H1 (cell line): ENCODE measurements at regions of chr22 and their contacts with region 1.

Region 1: GRCh38 chr22:50456466-50457234 is 18.2 kb downstream of the SBF1 start:
- DNase-seq: no peak
- H3K4me3 ChIP-seq: no peak overlapping the region
- H3K27ac ChIP-seq: no peak overlapping the region
- H3K4me1 ChIP-seq: no peaks in the 10 kb centered on the region
- H3K27me3 ChIP-seq: no peaks in the 10 kb centered on the region; a peak in 1 of 7 replicates
- CTCF ChIP-seq: peak; percentile 53 to 76 (median 63)
- EP300 ChIP-seq: no peak
- POLR2A ChIP-seq: no peak
- RAD21 ChIP-seq: peak; percentile 56 to 64

Region 2: DNA sequence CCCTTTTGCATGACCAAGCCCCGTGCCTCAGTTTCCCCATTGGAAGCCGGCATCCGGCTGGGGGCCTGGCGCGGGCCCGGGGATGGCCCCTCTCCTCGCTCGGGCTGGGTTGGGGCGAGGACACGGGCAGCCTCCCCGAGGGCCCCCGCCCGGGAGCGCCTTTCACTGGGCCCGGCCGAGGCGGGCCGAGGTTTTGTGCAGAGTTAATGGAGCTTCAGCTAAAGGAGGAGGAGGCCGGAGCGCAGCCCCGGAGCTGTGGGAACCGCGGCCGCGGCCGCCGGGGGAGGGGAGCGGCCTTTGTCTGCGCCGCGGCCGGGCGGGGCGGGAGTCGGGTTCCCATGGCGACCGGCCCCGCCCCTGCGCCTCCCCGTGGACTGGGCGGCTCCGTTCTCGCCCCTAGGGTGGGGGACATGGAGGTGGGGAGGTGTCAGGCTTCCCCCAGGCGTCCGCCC is 185.1 kb before region 1 on chr22:
- CTCF ChIA-PET with region 1: no interaction called
- POLR2A ChIA-PET with region 1: no interaction called
- DNase-seq: peak in 1 of 2 experiments; percentile 88
- H3K4me3 ChIP-seq: peak overlapping the region in 3 of 4 experiments; percentile 9 to 55 (median 23); a peak in 5 of 8 replicates
- H3K27ac ChIP-seq: no peak overlapping the region
- H3K4me1 ChIP-seq: peaks cover 2 to 14% (median 9%) of the 10 kb centered on the region in 4 experiments; a peak in 6 of 7 replicates
- H3K27me3 ChIP-seq: peaks cover 24 to 46% (median 39%) of the 10 kb centered on the region in 4 experiments; a peak in 6 of 7 replicates
- CTCF ChIP-seq: peak in 1 of 3 experiments; percentile 9; a peak in 1 of 4 replicates
- EP300 ChIP-seq: no peak
- POLR2A ChIP-seq: no peak
- RAD21 ChIP-seq: no peak

Region 3: DNA sequence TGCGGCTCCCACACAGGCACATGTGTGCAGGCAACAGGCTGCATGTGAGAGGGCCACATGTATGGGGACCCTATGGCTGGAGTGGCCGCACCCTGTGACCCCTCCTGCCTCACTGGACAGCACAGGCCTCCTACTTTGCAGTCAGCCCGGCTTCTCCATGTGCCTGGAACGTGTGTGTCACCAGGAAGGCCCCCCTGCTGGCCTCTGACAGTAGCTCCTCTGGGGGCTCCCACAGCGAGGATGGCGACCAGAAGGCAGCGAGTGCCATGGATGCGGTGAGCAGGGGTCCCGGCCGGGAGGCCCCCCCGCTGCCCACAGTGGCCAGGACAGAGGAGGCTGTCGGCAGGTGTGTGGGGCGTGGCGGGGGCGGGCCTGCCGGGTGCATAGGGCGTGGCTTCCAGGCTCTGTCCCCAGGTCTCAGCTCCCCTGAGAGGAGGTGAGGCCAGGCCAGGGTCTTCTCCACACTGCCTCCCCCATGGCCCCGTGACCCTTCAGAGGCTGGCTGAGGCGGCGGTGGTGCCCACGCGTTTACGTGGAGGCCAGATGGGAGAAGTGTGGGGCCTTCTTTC is 15.9 kb before region 1 on chr22:
- CTCF ChIA-PET with region 1: interaction called, 22 read pairs
- POLR2A ChIA-PET with region 1: interaction called, 5 read pairs
- DNase-seq: no peak
- H3K4me3 ChIP-seq: no peak overlapping the region
- H3K27ac ChIP-seq: no peak overlapping the region
- H3K4me1 ChIP-seq: peaks cover 0 to 9% (median 4%) of the 10 kb centered on the region in 4 experiments; a peak in 5 of 7 replicates
- H3K27me3 ChIP-seq: no peaks in the 10 kb centered on the region
- CTCF ChIP-seq: no peak
- EP300 ChIP-seq: no peak
- POLR2A ChIP-seq: no peak
- RAD21 ChIP-seq: no peak

Region 4: DNA sequence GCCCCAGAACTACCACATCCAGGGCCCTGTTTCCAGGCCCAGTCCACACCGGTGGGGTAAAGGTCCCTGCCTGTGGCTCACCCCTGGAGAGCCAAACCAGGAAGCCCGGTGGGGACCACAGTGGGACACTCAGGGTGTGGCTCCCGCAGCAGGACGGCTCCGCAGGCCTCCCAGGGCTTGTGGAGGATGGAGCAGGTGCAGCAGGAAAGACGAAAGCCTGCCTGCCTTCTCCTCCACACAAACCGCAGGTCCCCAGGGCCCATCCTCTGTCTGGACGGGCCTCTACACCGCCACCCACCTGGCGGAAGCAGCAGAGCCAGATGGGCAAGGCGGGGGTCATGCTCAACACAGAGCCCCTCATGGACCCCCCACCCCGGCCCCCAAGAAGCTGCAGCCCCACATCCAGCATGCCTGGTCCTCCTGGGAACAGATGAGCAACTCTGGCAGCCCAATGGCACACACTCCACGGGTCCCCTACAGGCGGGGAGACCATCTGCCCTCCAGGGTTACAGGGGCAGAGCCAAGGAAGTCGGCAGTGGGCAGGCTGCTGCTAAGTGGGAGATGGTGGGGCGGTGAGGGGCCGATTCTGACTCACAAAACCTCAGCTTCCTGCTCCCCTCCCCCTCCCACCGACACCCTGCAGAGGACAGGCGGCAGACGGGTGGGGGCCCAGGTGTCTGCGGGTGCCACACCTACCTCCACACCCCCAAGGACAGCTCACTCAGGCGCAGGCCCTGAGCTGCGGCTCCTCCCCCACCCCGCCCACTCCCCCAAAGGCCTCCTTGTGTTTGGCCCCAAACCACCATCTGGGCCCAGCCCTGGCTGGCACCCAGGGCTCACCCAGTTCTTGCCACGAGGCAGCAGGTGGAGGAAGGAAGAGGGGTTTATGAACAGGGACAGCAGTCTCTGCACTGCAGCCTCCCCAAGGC is 13.0 kb after region 1 on chr22:
- CTCF ChIA-PET with region 1: interaction called, 60 read pairs
- POLR2A ChIA-PET with region 1: interaction called, 4 read pairs
- DNase-seq: peak in 1 of 2 experiments; percentile 57
- H3K4me3 ChIP-seq: no peak overlapping the region
- H3K27ac ChIP-seq: no peak overlapping the region; the same call in 1 of the 2 replicates
- H3K4me1 ChIP-seq: peaks cover 0 to 22% (median 13%) of the 10 kb centered on the region in 4 experiments; a peak in 6 of 7 replicates
- H3K27me3 ChIP-seq: no peaks in the 10 kb centered on the region; a peak in 1 of 7 replicates
- CTCF ChIP-seq: no peak
- EP300 ChIP-seq: no peak
- POLR2A ChIP-seq: no peak
- RAD21 ChIP-seq: no peak